Sigmoid colon (tissue), 7 donors: ENCODE measurements at regions of chr2 and their contacts with region 1.

Region 1: DNA sequence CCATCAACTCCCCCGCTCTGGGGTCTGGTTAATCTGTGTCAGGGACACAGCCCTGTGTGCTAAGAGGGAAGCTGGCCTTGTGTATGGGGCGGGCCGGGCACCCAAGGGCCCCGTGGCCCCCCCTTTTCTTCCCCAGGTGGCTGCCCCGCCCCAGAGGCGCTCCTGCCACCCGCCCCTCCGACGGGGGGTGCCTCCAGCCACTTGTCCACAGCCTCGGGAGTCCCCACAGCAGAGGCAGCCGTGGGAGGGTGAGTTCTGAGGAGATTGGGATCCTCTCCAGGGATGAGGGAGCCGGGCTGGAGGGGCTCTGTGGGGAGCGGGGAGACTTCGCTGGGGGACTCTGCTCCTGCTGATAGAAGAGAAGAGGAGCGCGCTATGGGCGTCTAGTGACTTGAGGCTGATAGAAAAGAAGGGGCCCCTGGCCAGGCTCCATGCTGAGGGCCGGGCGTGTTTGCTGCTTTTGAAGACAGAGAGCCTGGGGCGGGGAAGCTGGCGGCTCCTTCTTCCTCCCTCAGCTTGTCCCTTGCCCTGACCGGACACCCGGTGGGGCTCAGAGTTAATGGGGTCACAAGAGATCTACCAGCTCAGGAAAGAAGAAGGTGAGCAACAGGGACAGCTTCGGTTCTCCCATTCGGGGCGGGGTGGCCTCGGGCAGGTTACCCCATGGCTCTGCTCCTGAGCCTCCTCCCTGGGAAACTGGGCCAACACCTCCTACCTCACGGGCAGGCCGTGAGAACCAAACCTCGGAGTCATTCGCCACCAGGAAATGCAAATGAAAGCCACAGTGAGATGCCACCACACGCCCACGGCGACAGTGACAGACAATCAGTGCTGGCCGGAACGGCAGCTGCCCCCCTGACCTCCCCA is 89.4 kb upstream of the TAF1B start:
- DNase-seq: no peak
- H3K4me3 ChIP-seq: no peak overlapping the region
- H3K27ac ChIP-seq: no peak overlapping the region
- H3K4me1 ChIP-seq: peaks cover 0 to 28% (median 14%) of the 10 kb centered on the region in 4 donors
- H3K27me3 ChIP-seq: peaks cover 0 to 11% (median 0%) of the 10 kb centered on the region in 3 donors
- CTCF ChIP-seq: no peak
- EP300 ChIP-seq: no peak
- POLR2A ChIP-seq: no peak

Region 2: GRCh38 chr2:9782197-9782719 is 28.4 kb after region 1 on chr2:
- intact Hi-C with region 1: loop called (anchors 2 kb)
- DNase-seq: no peak
- H3K4me3 ChIP-seq: no peak overlapping the region
- H3K27ac ChIP-seq: no peak overlapping the region
- H3K4me1 ChIP-seq: peaks cover 0 to 4% (median 0%) of the 10 kb centered on the region in 4 donors
- H3K27me3 ChIP-seq: no peaks in the 10 kb centered on the region
- CTCF ChIP-seq: no peak
- EP300 ChIP-seq: no peak
- POLR2A ChIP-seq: no peak